Esophagus muscularis mucosa (tissue), 4 donors: ENCODE measurements at regions of chrX and their contacts with region 1.

Region 1: DNA sequence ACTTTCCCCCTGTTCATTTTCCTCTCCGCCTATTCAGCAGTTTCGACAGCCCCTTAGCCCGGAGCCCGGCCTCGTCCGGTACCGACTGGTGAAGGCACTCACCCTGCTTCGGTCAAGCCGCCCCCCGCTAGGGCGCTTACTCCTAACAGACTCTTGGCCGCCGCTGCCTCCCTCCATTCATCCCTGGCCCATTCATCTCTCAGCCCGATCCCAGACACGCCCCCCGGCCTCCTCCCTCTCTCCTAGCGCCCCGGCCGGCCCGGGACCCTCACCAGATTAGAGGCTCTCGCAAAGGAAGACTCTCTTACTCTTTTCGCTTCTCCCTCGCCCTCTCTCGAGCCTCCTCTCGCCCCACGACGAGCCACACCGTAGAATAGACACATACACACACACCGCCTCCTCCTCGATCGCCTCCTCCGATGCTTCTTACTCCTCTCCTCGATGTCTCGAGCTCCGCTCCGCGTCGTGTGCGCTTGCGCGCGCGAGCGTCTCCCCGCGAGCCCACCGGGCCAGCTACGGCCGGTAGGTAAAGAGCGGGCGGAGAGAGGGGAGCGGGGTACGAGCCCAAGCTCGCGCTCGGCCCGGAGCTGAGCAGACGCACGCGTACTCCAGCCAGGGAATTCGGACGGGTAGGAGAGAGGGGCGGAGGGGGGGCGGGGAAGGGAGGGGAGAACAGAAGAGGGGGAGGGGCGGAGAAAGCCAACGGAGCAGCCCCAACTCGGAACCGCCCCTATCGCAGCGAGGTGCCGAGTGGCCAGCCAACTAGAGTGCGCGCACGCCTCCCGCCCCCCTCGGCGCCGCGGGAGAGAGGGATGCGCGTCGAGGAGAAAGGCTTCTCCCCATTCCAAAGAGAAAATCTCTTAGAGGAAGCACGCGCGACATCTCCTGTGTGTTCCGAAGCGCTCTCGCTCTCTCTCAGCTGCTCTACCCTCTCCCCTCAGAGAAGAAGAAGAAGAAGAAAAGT is at the start of gene WNK3:
- DNase-seq: peak; percentile 92
- H3K4me3 ChIP-seq: peak within 1 kb of the TSS; percentile 57 to 66 (median 57)
- H3K27ac ChIP-seq: peak within 1 kb of the TSS; percentile 73 to 83 (median 80)
- H3K4me1 ChIP-seq: peaks cover 0 to 14% (median 8%) of the 10 kb centered on the region in 4 donors
- H3K27me3 ChIP-seq: no peaks in the 10 kb centered on the region
- CTCF ChIP-seq: no peak
- EP300 ChIP-seq: no peak
- POLR2A ChIP-seq: no peak
- total RNA-seq, gene WNK3: 1.6 to 2.0 (median 1.8) TPM

Region 2: DNA sequence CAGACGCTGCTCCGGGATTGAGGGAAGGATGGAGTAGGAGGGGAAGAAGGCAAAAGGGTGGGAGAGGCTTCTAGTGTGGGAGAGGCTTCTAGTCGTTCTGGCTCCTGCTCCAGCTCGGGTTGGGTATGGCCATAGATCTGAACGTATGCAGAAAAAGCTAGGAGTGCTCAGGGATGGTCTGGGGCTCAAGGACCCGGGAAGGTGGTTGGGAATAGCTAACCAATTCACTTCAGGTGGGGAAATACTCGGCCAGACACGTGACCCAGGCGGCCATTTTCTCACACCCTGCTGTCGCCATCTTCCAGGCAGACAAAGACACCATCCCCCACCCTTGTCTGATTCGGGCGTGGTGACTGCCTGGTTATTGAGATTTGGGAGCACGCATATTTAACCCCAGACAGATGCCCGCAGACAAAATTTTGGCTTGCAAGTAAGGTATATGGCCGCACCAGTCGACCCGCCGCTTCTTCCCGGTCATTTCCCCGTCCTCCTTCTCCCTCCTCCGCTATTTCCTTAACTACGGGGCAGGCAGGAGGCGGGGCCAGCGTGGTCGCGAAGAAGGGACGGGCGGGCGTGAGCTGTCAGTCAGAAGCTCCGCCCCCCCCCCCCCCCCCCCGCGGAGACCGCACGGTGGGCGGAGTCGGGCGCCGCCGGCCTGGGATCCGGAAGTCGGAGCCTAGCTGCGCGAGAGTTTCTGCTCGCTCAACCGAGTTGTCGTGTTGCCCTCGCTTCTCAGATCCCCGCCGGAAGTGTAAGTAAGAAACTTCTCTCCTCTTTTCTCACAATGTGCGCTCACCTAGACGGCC is 172.1 kb after region 1 on chrX and contains the start of gene GNL3L:
- intact Hi-C with region 1: loop called (anchors 10 kb)
- DNase-seq: peak; percentile 96
- H3K4me3 ChIP-seq: peak within 1 kb of the TSS; percentile 62 to 73 (median 66)
- H3K27ac ChIP-seq: peak within 1 kb of the TSS; percentile 76 to 87 (median 80)
- H3K4me1 ChIP-seq: peaks cover 0 to 31% (median 25%) of the 10 kb centered on the region in 4 donors
- H3K27me3 ChIP-seq: no peaks in the 10 kb centered on the region
- CTCF ChIP-seq: no peak
- EP300 ChIP-seq: no peak
- POLR2A ChIP-seq: no peak
- total RNA-seq, gene GNL3L: 22.0 to 29.6 (median 26.3) TPM

Region 3: GRCh38 chrX:54602563-54602962 is 244.9 kb after region 1 on chrX:
- intact Hi-C with region 1: no loop called
- DNase-seq: no peak
- H3K4me3 ChIP-seq: no peak overlapping the region
- H3K27ac ChIP-seq: no peak overlapping the region
- H3K4me1 ChIP-seq: no peaks in the 10 kb centered on the region
- H3K27me3 ChIP-seq: no peaks in the 10 kb centered on the region
- CTCF ChIP-seq: no peak
- EP300 ChIP-seq: no peak
- POLR2A ChIP-seq: no peak